BJ (cell line): ENCODE measurements at regions of chr2 and their contacts with region 1.

Region 1: DNA sequence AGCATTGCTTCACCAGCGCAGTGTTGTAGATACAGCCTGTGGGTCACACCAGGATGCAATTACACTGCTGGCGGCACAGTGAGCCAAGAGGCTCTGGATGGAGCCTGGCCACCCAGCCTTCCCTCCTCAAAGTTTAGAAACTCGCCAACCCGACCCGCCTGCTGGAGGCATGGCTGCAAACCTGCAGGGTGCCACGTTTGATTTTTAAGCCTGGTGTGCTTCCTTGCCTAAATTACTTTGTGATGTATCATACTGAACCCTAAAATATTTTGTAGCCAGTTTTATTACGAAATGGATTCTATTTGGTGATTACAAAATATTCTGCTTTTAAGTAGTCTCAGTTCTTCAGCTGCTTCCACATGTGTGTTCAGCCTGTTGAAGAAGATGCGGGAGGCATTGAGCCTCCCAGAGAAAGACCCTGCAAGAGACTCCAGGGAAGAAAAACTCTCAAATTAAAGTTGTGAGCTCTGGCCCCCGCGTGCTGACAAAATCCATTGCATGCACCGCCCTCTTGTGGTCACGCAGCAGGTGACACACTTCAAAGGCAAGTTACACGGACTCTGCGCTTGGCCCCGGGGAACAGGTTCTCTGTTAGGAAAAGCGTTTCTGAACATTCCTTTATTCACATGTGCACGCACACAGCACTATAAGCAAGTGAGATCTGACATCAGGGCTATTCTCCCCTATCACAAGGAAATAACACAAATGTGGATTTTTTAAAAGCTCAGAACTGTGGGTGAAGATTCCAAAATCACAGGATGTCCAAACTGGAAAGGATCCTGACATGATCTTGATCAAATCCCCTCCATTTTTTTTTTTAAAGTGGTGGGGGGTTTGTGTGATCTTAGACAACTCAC is 63.0 kb upstream of the TWIST2 start:
- DNase-seq: peak; percentile 84
- H3K4me3 ChIP-seq: no peak overlapping the region
- H3K27me3 ChIP-seq: no peaks in the 10 kb centered on the region
- CTCF ChIP-seq: peak; percentile 78

Region 2: DNA sequence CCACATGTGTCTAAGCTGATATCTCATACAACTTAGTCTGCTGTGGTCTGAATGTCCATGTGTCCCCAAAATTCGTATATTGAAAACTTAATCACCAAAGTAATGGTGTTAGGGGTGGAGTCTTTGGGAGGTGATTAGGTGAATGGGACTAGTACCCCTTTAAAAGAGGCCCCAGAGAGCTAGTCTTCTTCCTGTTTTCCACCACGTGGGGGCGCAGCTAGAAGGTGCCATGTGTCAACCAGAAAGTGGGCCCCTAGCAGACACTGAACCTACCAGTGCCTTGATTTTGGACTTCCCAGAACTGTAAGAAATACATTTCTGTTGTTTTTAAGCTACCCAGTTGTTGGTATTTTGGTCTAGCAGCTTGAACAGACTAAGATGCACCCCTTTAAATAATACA is 271.6 kb before region 1 on chr2:
- CTCF ChIA-PET with region 1: interaction called, 60 read pairs
- POLR2A ChIA-PET with region 1: interaction called, 4 read pairs
- DNase-seq: no peak
- H3K4me3 ChIP-seq: no peak overlapping the region
- H3K27me3 ChIP-seq: 0 out of 2 replicates have a peak, but pooled peaks cover 2% of the 10 kb centered on the region
- CTCF ChIP-seq: peak; percentile 73

Region 3: DNA sequence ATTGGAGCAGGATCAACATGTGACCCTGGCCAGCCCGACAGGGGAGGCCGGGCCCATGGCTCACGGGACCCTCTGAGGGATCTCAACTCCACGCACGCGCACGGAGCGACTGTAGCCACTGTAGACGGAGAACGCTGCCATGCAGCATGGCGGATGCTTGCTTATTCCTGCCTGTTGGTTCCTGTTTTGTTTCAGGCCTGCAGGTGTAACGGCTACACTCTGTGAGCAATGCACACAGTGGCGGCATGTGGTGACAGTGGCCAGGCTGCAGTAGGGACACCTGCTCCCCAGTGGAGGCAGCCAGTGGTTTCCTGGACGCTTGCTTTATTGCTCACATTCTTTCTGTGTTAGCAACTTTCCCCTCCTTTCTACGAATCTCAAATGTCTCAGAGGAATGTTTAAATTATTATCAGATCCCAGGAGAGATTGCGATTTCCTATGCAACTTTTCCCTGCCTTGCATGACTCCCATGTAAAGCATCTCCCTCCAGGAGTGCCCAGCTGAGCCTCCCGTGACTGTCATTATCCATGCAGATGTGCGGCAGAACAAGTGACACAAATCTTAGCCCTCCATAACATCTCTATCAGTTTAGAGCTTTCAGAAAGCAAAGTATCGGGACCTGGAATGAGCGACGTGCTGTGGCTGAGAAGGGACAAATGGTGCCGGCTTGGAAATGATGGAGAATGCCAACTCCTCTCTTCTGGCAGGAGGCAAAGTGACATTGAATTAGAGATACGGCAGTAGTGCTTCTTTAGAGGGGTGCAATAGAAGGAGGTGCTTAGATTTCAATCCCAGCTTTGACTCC is 148.4 kb before region 1 on chr2:
- CTCF ChIA-PET with region 1: interaction called, 13 read pairs
- POLR2A ChIA-PET with region 1: no interaction called
- DNase-seq: peak; percentile 92
- H3K4me3 ChIP-seq: no peak overlapping the region
- H3K27me3 ChIP-seq: peaks cover 5% of the 10 kb centered on the region; the same call in 1 of the 2 replicates
- CTCF ChIP-seq: no peak; the same call in 1 of the 2 replicates

Region 4: GRCh38 chr2:238728330-238729260 is 56.3 kb before region 1 on chr2:
- CTCF ChIA-PET with region 1: interaction called, 24 read pairs
- POLR2A ChIA-PET with region 1: interaction called, 4 read pairs
- DNase-seq: peak; percentile 100
- H3K4me3 ChIP-seq: no peak overlapping the region
- H3K27me3 ChIP-seq: no peaks in the 10 kb centered on the region
- CTCF ChIP-seq: no peak

Region 5: DNA sequence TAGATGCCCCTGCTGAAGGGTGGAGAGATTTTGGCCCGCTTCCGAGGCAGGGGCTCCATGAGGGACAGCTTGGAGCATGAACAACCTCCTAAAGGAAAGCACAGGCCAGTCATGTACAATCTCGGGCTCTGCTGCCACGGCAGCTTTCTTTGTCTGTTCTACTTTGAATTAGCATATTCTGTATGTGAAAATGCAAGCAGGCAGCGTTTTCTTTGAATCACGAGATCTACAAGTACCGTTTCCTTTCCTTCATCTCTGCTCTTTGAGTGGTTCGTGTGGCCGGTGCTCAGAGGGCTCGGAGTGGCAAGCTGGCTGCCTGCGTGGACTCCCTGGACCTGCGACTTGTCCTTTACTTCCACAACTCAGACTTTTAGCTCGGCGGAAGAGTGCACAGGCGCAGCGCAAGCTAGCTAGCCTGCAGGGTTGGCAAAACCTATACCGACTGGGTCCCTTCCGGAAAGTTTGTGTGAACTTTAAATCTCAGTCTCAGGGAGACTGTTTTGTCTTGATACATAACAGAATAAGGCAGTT is 69.9 kb after region 1 on chr2:
- CTCF ChIA-PET with region 1: interaction called, 84 read pairs
- POLR2A ChIA-PET with region 1: interaction called, 3 read pairs
- DNase-seq: no peak
- H3K4me3 ChIP-seq: peak overlapping the region; percentile 46
- H3K27me3 ChIP-seq: no peaks in the 10 kb centered on the region
- CTCF ChIP-seq: no peak